ENCODE measurements at regions of chr15 and their contacts with region 1.

Region 1: GRCh38 chr15:71386448-71387236 is 271.4 kb downstream of the THSD4 start:
- DNase-seq: peak in 1 of 2 experiments; percentile 56
- ATAC-seq: peak; percentile 54 to 66; a peak in 4 of 6 replicates
- H3K4me3 ChIP-seq: no peak overlapping the region
- H3K27ac ChIP-seq: peak overlapping the region; percentile 60 to 69
- H3K4me1 ChIP-seq: peaks cover 40% of the 10 kb centered on the region
- CTCF ChIP-seq: peak; percentile 83
- EP300 ChIP-seq: no peak
- POLR2A ChIP-seq: no peak
- RAD21 ChIP-seq: peak; percentile 84 to 89

Region 2: DNA sequence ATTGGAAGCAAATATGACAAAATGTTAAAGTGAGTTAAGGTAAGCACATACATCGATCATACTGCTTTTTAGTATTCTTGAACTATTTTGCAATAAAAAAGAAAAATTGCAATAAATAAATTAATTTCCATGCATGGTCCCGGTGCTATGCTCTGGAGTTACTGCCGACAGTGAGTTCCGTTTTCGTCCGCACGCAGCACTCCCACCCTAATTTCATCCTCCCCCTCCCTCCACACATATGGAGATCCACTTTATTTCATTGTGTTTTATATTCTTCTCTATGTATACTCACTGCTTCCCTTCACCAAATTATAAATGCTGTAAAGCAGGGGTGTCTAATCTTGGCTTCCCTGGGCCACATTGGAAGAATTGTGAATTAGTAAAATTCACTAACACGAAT is 24.1 kb before region 1 on chr15:
- CTCF ChIA-PET with region 1: interaction called, 11 read pairs
- POLR2A ChIA-PET with region 1: no interaction called
- DNase-seq: no peak
- ATAC-seq: no peak
- H3K4me3 ChIP-seq: no peak overlapping the region
- H3K27ac ChIP-seq: no peak overlapping the region
- H3K4me1 ChIP-seq: no peaks in the 10 kb centered on the region
- CTCF ChIP-seq: no peak
- EP300 ChIP-seq: no peak
- POLR2A ChIP-seq: no peak
- RAD21 ChIP-seq: no peak

Region 3: DNA sequence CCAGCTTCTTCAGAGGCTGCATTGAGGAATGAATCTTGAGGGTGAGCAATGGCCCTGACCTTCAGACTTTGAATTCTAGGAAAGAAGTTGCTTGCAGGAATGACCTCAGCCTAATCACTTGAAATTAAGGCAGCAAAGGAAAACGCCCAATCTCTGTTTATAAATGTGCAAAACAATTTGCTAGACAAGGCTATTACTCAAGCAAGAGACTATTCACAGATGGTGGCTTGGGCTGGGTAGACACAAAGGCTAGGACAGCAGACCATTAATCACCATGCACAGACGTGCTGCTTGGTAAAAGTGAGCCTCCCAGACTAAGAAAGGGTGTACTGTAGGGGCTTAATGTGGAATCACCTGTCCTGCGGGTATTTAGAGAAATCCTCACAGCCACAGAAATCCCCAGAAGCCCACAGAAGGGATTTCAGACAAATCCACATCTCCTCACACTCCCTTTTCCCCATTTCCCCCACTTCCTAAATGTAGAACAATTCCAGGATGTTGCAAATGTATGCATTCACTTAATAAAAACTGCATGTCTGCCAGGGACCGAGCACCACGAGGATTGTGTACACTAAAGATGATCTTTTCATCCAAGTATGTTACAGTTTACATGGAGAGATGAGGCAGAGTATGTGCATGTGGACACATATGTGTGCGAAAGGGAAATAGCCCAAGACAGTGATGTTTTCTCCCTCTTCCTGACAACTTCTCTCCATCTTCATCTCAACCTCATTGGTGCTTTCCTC is 11.9 kb before region 1 on chr15:
- CTCF ChIA-PET with region 1: interaction called, 14 read pairs
- POLR2A ChIA-PET with region 1: no interaction called
- DNase-seq: no peak
- ATAC-seq: no peak
- H3K4me3 ChIP-seq: no peak overlapping the region
- H3K27ac ChIP-seq: no peak overlapping the region
- H3K4me1 ChIP-seq: no peaks in the 10 kb centered on the region; the same call in 2 of the 3 replicates
- CTCF ChIP-seq: no peak
- EP300 ChIP-seq: no peak
- POLR2A ChIP-seq: no peak
- RAD21 ChIP-seq: no peak

Region 4: GRCh38 chr15:71397377-71397776 is 10.7 kb after region 1 on chr15:
- CTCF ChIA-PET with region 1: interaction called, 21 read pairs
- POLR2A ChIA-PET with region 1: interaction called, 9 read pairs
- DNase-seq: peak in 1 of 2 experiments; percentile 43
- ATAC-seq: no peak
- H3K4me3 ChIP-seq: no peak overlapping the region
- H3K27ac ChIP-seq: no peak overlapping the region; a peak in 1 of 6 replicates
- H3K4me1 ChIP-seq: peaks cover 12% of the 10 kb centered on the region
- CTCF ChIP-seq: no peak
- EP300 ChIP-seq: no peak
- POLR2A ChIP-seq: no peak
- RAD21 ChIP-seq: no peak

Region 5: DNA sequence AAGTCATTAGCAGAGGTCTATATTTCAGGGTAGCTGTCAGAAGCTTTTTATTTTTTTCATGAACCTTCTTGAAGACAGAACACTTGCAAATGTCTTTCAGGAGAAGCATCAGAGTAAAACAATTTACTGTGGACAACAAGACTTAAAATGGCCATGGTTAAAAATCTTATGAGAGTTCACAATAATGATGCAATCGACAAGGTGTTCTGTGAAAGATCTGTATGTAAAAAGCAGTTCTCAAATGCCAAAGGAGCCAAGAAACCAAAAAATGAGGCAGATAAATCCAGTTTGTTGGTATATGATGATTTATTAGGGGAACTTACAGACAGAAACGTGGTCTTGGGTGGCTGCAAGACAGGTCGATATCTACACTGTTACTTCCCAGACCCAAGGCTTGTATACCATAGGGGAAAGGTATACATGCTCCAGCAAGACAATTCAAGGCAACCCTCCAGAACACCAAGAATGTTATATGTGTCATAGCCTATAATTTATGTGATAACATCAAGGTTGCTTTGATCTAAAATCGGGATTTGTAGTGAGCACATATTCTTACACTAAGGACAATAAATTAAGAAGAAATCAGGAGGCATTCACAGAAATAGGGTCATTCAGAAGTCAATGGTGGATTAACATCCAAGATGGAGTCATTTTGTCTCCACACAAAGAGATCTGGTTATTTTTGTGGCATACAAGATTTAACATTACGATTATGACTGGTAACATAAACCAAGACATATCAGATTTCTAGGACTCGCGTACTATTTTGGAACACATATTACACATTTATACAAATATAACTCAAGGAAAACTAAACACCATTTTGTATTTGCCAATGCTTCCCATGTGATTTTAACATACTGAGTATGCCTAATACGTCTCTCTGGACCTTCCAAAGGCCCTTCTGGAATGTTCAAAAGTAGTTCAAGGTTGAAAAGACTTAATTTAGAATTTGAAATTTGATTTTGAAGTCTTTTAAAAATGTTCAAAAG is 45.0 kb after region 1 on chr15:
- CTCF ChIA-PET with region 1: interaction called, 12 read pairs
- POLR2A ChIA-PET with region 1: no interaction called
- DNase-seq: no peak
- ATAC-seq: no peak
- H3K4me3 ChIP-seq: no peak overlapping the region
- H3K27ac ChIP-seq: peak overlapping the region; percentile 20 to 53; a peak in 3 of 6 replicates
- H3K4me1 ChIP-seq: peaks cover 34% of the 10 kb centered on the region
- CTCF ChIP-seq: no peak
- EP300 ChIP-seq: no peak
- POLR2A ChIP-seq: no peak
- RAD21 ChIP-seq: no peak

Region 6: DNA sequence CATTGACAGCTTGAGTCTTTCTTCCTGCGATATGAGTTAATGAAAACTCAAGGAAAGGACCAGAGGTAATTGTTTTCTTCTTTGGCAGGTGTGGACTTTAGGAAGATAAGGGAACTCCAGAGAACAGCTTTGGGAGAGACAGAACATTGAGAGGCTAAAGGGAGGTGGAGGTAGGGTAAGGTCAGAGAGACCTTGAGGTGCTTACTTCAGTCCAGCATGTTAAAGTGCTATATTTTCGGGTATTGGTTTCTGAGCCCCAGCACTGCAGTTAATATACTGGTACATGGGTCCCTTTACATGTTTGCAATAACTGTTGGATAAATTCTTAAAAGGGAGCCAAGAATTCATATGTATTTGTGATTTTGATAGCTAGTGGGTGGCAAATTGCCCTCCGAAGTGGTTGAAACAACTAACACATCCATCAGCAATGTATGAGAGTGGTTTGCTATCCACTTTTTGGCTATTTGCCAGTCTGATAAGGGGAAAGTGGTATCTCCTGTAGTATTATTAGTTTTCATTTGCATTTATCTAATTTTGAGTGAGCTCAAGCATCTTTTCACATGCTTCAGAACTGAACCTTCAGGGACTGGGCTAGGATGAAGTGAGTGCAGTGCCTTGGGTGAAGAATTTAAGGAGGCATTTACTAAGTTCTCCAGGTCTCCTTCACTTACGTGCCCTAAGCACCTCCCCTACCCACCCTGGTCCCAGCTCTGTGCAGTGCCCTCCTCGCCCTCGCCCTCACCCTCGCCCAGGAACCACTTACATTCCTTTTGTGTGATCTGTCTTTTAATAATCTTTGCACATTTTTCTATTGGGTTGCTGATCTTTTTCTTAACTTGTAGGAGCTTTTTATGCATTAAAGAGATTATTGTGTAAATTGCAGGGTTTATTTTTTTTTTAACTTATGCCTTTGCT is 51.0 kb after region 1 on chr15:
- CTCF ChIA-PET with region 1: interaction called, 43 read pairs
- POLR2A ChIA-PET with region 1: interaction called, 3 read pairs
- DNase-seq: peak in 1 of 2 experiments; percentile 72
- ATAC-seq: peak in 1 of 2 experiments; percentile 69; a peak in 3 of 6 replicates
- H3K4me3 ChIP-seq: no peak overlapping the region
- H3K27ac ChIP-seq: peak overlapping the region; percentile 69 to 71
- H3K4me1 ChIP-seq: peaks cover 55% of the 10 kb centered on the region
- CTCF ChIP-seq: no peak
- EP300 ChIP-seq: no peak
- POLR2A ChIP-seq: no peak
- RAD21 ChIP-seq: no peak

Region 7: DNA sequence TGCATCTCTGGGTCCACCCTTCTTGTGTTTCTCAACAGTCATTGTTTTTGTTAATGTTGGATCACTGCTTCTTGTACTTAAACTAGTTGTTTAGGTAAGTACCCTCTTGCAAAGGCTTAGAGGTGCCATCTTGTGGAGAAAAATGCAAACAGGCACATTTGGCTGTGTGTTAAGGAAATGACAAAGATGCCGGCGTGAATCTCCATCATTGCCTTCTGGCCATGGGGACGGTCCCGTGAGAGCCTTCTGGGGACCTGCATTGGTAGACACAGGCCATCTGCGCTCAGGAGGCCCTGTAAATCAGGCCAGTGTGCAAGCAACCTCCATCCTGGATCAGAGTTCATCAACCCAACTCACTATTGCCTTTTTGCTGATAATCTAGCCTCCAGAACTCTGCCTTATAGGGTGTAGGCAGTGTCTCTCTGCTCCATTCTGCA is 265.1 kb after region 1 on chr15:
- CTCF ChIA-PET with region 1: interaction called, 10 read pairs
- POLR2A ChIA-PET with region 1: no interaction called
- DNase-seq: peak; percentile 51 to 86
- ATAC-seq: peak; percentile 72 to 94
- H3K4me3 ChIP-seq: no peak overlapping the region
- H3K27ac ChIP-seq: peak overlapping the region; percentile 22 to 69
- H3K4me1 ChIP-seq: peaks cover 8% of the 10 kb centered on the region; the same call in 2 of the 3 replicates
- CTCF ChIP-seq: peak; percentile 87
- EP300 ChIP-seq: no peak
- POLR2A ChIP-seq: no peak
- RAD21 ChIP-seq: peak; percentile 89 to 91

Measured in A549 (cell line).